AG04450 (cell line): ENCODE measurements at regions of chr21 and their contacts with region 1.

Region 1: DNA sequence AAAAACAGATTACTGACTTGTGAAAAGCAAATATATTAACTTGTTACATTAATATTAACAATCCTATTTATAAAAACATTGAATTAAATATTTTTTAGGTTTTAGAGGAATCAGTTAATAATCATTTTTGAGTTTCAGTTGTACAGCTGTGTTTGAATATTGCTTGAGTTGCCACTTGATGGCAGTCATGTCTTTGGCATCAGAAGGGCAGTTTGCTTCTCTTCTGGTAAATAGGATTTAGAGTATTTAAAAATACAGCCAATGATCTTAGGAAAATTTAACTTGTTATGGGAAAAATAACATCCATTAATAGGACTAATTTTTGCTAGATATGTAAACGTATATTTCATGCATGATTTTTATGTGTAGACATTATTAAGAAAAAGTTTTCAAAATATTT is 234.1 kb downstream of the NCAM2 start:
- DNase-seq: peak; percentile 29
- H3K4me3 ChIP-seq: no peak overlapping the region
- H3K27ac ChIP-seq: no peak overlapping the region
- H3K27me3 ChIP-seq: no peaks in the 10 kb centered on the region
- CTCF ChIP-seq: peak; percentile 70

Region 2: DNA sequence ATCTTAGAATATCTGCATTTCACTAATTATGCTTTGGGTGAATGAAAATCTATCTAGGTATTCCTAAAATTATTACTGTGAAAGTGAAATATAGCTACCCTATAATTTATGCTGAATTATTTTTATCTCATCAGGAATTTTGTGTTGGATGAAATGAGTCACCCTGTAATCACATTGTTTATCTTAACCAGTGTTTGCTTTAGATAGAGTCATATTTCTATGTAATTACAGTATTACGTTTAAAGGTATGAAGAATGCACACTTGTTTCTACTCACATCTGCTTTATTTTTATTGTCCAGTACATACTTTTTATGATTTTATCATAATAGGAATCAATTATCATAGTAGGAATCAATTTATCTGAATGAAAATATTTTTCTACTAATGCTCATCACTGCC is 15.1 kb after region 1 on chr21:
- CTCF ChIA-PET with region 1: interaction called, 12 read pairs
- POLR2A ChIA-PET with region 1: no interaction called
- DNase-seq: no peak
- H3K4me3 ChIP-seq: no peak overlapping the region
- H3K27ac ChIP-seq: no peak overlapping the region
- H3K27me3 ChIP-seq: no peaks in the 10 kb centered on the region
- CTCF ChIP-seq: no peak

Region 3: DNA sequence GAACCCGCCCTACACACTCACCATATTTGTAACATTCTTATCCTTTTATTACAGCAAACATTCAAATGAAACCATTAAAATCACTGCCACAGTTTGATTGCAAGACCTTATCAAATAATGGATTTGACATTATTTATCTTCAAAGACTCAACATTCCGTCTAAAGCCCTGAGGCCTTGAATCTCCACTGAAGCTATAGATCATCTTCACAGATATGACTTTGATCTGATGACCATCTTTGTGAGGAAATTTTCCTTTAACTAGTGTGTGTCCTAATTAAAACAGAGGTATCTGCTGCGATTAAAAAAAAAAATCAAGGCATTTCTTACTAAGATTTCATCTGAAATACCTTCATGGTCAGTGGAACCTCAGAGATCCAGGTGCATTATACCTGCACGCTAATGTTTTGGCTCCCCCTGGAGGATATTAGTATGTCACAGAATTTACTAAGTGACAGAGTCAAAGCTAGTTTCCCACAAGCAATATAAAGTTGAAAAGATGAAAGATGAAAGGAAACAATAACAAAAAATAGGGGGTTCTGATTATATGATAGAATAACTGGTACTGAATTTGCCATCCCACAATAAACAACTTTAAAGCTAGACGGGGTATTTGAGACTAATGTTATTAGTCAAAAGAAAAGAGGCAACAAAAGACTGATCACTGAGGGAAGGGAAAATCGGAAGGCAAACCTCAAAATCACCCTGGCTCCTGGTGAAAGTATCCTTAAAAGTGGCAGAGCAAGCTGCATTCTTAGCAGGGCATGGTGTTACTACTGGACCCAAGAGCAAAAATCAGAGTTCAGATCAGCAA is 689.3 kb after region 1 on chr21:
- CTCF ChIA-PET with region 1: interaction called, 27 read pairs
- POLR2A ChIA-PET with region 1: interaction called, 3 read pairs
- DNase-seq: no peak
- H3K4me3 ChIP-seq: no peak overlapping the region
- H3K27ac ChIP-seq: no peak overlapping the region
- H3K27me3 ChIP-seq: no peaks in the 10 kb centered on the region
- CTCF ChIP-seq: peak; percentile 63